ENCODE measurements at regions of chr17 and their contacts with region 1.

Region 1: GRCh38 chr17:65556014-65556909 is 5.2 kb downstream of the AXIN2 start:
- DNase-seq: peak; percentile 79 to 92 (median 91)
- ATAC-seq: peak; percentile 21 to 34
- H3K4me3 ChIP-seq: peak overlapping the region; percentile 100
- H3K27ac ChIP-seq: no peak overlapping the region
- H3K4me1 ChIP-seq: peaks cover 4% of the 10 kb centered on the region
- H3K27me3 ChIP-seq: no peaks in the 10 kb centered on the region

Region 2: GRCh38 chr17:65294179-65294720 is 262.0 kb before region 1 on chr17:
- intact Hi-C with region 1: loop called in 2 of 4 experiments (anchors 5 to 10 kb)
- DNase-seq: peak; percentile 65 to 76 (median 68)
- ATAC-seq: peak; percentile 85 to 87
- H3K4me3 ChIP-seq: no peak overlapping the region
- H3K27ac ChIP-seq: no peak overlapping the region
- H3K4me1 ChIP-seq: peaks cover 2% of the 10 kb centered on the region
- H3K27me3 ChIP-seq: no peaks in the 10 kb centered on the region

Region 3: DNA sequence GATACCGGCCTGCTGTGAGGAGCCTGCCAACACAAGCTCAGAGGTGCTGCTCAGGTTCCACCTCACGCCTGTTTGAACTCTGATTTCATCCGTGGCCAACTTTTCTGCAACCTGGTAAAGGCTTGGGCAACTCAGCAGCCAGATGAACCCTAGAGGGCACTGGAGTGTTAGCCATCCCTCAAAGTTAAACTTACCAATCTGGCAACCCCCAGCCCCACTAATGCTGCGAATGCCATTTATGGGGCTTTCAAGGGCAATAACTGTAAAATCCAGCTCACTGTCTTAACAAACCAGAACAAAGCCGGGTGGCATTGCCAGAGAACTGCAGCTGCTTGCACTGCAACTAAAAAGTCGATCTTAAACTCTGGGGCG is 100.3 kb before region 1 on chr17:
- intact Hi-C with region 1: loop called (anchors 5 kb)
- DNase-seq: no peak
- ATAC-seq: peak; percentile 72 to 76
- H3K4me3 ChIP-seq: no peak overlapping the region
- H3K27ac ChIP-seq: peak overlapping the region; percentile 83
- H3K4me1 ChIP-seq: peaks cover 3% of the 10 kb centered on the region
- H3K27me3 ChIP-seq: no peaks in the 10 kb centered on the region

Region 4: DNA sequence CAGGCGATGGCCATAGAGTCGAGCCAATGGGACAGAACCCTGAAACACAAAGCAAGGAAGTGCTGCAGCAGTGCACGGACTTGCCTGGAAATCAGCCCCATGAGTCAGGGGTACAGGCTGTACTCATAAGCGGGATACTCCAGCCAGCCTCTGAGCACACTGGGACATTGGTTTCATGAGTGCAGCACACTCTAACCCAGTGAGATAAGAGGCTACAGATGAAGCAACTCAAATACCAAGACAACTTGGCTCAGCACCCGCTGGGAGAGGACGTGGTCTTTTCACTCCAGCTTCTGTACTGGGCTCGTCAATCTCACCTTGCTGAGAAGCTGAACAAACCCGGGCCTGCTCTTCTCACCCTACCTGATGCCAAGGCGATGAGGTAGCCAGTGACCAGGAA is 93.0 kb before region 1 on chr17:
- intact Hi-C with region 1: loop called (anchors 5 kb)
- DNase-seq: peak; percentile 87 to 94 (median 90)
- ATAC-seq: peak; percentile 99
- H3K4me3 ChIP-seq: no peak overlapping the region
- H3K27ac ChIP-seq: peak overlapping the region; percentile 95
- H3K4me1 ChIP-seq: no peaks in the 10 kb centered on the region
- H3K27me3 ChIP-seq: no peaks in the 10 kb centered on the region

Region 5: DNA sequence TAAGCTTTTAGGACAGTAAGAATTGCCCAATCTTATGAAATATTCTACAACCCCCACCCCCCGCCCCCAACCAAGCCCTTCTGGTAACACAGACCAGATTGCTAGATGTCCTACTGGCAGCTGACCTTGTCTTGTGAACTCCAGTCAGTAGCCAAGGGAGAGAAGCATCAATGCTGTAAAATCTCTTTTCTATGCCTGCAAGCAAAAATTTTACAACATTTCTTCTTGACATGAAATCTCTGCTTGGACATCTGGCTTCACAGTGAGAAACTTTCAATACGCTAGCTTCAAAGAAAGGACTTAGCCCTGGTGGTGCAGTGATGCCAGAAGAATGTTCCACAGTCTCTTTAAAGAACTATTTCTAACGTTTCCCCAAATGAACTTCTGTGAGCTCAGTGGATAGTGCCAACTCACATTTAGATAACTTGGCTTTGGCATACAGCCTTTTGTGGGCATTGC is 174.5 kb after region 1 on chr17:
- intact Hi-C with region 1: no loop called
- DNase-seq: no peak
- ATAC-seq: no peak
- H3K4me3 ChIP-seq: no peak overlapping the region
- H3K27ac ChIP-seq: no peak overlapping the region
- H3K4me1 ChIP-seq: no peaks in the 10 kb centered on the region
- H3K27me3 ChIP-seq: no peaks in the 10 kb centered on the region